ENCODE measurements at regions of chr18 and their contacts with region 1.

Region 1: GRCh38 chr18:76405681-76406356 is 89.2 kb downstream of the ZNF516 start:
- DNase-seq: peak; percentile 66 to 87
- H3K4me3 ChIP-seq: no peak overlapping the region
- CTCF ChIP-seq: no peak
- POLR2A ChIP-seq: no peak

Region 2: GRCh38 chr18:76209597-76209996 is 196.2 kb before region 1 on chr18:
- intact Hi-C with region 1: no loop called
- DNase-seq: no peak
- H3K4me3 ChIP-seq: no peak overlapping the region
- CTCF ChIP-seq: no peak
- POLR2A ChIP-seq: no peak

Region 3: GRCh38 chr18:76619621-76620315 is 213.9 kb after region 1 on chr18:
- intact Hi-C with region 1: loop called (anchors 10 kb)
- DNase-seq: peak in 1 of 2 donors; percentile 37
- H3K4me3 ChIP-seq: no peak overlapping the region
- CTCF ChIP-seq: no peak
- POLR2A ChIP-seq: no peak

Region 4: DNA sequence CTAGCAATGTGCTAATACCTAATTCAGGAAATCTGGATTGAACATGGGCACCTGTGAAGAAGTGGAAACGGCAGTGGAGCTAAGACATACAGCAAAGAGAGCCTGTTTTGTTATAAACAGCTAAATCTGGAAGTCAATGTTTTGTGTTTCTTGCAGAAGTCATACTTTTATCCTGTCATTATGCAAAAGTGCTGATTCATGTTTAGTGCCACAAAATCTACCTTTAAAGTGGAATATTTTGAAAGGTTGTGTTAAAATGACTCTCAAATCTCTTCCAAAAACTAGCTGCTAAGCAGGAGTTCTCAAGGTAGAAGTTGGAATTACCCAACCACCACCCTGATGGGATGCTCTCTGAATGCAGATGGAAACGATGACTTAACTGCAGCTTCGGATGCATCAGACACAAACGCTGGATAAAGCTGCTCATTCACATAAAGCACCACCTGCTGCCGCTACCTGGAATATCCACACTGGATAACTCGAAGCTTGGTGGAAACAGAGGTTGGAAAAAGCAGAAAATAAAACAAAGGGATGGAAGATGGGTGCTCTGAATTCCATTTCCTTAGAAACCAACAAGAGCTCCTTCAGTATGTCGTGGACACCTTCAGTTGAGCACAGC is 283.9 kb after region 1 on chr18:
- intact Hi-C with region 1: loop called (anchors 5 kb)
- DNase-seq: no peak
- H3K4me3 ChIP-seq: no peak overlapping the region
- CTCF ChIP-seq: no peak
- POLR2A ChIP-seq: no peak

Region 5: GRCh38 chr18:76709659-76710645 is 304.1 kb after region 1 on chr18:
- intact Hi-C with region 1: loop called (anchors 5 kb)
- DNase-seq: peak; percentile 41 to 92
- H3K4me3 ChIP-seq: no peak overlapping the region
- CTCF ChIP-seq: peak in 1 of 3 donors; percentile 82
- POLR2A ChIP-seq: no peak

Measured in lower leg skin (tissue), 4 donors.